Body of pancreas (tissue), 4 donors: ENCODE measurements at regions of chr6 and their contacts with region 1.

Region 1: GRCh38 chr6:110815217-110816109 is at the start of gene CDK19:
- DNase-seq: peak; percentile 98 to 99 (median 98)
- ATAC-seq: peak; percentile 96
- H3K4me3 ChIP-seq: peak within 1 kb of the TSS; percentile 75 to 81
- H3K27ac ChIP-seq: peak within 1 kb of the TSS; percentile 82 to 98 (median 97)
- H3K4me1 ChIP-seq: peaks cover 10% of the 10 kb centered on the region
- H3K27me3 ChIP-seq: no peaks in the 10 kb centered on the region
- CTCF ChIP-seq: peak in 2 of 7 experiments; percentile 4 to 13
- POLR2A ChIP-seq: peak; percentile 56 to 96 (median 94)
- total RNA-seq, gene CDK19: 4.0 to 8.0 TPM

Region 2: DNA sequence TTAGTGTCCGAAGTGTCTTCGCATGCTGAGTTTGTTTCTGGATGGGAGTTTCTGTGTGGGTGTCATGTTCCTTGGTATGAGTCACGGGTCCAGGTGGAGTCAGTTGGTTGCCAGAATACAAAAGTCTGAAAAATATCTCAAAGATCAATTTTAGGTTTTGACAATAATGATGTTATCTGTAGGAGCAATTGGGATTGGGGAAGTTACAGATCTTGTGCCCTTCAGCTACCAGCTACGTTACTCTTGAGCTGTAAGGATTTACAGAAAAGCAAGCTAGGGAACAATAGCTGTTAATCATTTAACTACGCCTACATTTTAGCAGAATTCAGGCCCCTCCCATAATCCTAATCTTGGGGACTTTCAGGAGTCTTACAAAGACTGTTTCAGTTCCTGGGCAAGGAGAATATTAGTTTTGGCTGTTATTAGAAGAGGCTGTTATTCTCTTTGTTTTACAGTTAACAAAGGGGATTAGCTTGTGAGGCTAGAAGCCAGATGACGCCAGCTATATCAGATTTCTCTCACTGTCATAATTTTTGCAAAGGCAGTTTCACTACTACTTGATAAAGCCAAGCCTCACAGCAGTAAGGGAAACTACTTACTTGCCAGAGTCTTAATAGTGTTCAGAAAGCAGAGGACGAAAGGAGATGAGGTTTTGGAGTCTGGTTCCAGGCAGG is 323.7 kb before region 1 on chr6:
- intact Hi-C with region 1: no loop called
- DNase-seq: no peak
- ATAC-seq: no peak
- H3K4me3 ChIP-seq: no peak overlapping the region
- H3K27ac ChIP-seq: no peak overlapping the region
- H3K4me1 ChIP-seq: peaks cover 8% of the 10 kb centered on the region
- H3K27me3 ChIP-seq: no peaks in the 10 kb centered on the region
- CTCF ChIP-seq: no peak
- POLR2A ChIP-seq: no peak

Region 3: DNA sequence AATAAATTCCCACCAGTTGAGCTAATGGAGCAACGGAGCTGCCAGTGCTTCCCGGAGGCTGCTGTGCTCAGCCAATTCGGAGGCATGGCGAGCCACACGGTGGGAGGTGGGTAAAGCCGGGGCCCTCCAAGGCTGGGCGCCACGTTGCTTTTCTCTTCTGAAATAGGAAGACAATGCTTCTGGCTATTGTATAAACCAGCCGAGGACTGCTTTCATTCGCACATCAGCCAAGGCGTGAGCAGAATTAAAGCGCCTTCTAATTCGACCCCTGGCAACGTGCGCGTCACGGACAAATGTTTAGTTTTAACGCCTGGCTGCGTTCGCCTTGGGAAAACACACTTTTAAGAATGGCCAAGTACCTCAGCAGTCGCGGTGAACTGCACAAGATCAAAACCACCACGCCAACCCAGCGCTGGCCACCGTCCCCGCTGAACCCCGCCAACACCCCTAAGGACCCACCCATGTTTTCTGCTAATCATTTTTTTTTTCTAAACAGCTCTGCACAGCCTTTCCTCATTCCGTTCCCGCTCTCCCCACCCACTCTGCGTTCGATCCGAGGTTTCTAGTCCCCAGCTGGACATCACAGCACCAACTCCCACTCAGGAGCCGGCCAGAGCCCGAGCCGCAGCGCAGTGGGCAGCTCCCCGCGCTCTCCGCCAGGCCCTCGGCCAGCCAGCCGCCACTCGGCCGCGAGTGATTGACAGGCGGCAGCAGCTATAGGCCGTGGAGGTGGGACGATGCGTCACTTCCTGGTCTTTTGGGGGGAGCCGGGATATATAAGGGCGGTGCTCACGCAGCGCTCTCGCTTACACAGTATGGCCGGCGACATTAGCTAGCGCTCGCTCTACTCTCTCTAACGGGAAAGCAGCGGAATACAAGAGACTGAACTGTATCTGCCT is 58.8 kb after region 1 on chr6 and contains the start of gene AMD1:
- intact Hi-C with region 1: loop called (anchors 10 kb)
- DNase-seq: peak; percentile 97 to 99 (median 98)
- ATAC-seq: peak; percentile 86
- H3K4me3 ChIP-seq: peak within 1 kb of the TSS; percentile 75 to 98
- H3K27ac ChIP-seq: peak within 1 kb of the TSS; percentile 69 to 98 (median 94)
- H3K4me1 ChIP-seq: peaks cover 35% of the 10 kb centered on the region
- H3K27me3 ChIP-seq: no peaks in the 10 kb centered on the region
- CTCF ChIP-seq: peak in 4 of 7 experiments; percentile 10 to 33 (median 20)
- POLR2A ChIP-seq: peak; percentile 98 to 100 (median 100)
- total RNA-seq, gene AMD1: 42.0 to 60.3 TPM